Adrenal gland (tissue), 19 donors: ENCODE measurements at regions of chr9 and their contacts with region 1.

Region 1: GRCh38 chr9:112486221-112487007 is at the start of gene KIAA1958:
- DNase-seq: peak; percentile 81 to 92 (median 88)
- H3K4me3 ChIP-seq: peak within 1 kb of the TSS; percentile 34 to 97 (median 74)
- H3K27ac ChIP-seq: peak within 1 kb of the TSS; percentile 47 to 90 (median 71)
- H3K4me1 ChIP-seq: peaks cover 22 to 31% of the 10 kb centered on the region in 2 donors
- H3K27me3 ChIP-seq: no peaks in the 10 kb centered on the region
- CTCF ChIP-seq: no peak
- POLR2A ChIP-seq: peak; percentile 29 to 66
- total RNA-seq, gene KIAA1958: 17.0 to 67.2 (median 37.9) TPM

Region 2: GRCh38 chr9:112546149-112547012 is 60.0 kb after region 1 on chr9:
- intact Hi-C with region 1: loop called in 1 of 2 experiments (anchors 10 kb)
- DNase-seq: no peak
- H3K4me3 ChIP-seq: no peak overlapping the region
- H3K27ac ChIP-seq: peak overlapping the region in 4 of 5 donors; percentile 24 to 78 (median 44)
- H3K4me1 ChIP-seq: peaks cover 56 to 96% of the 10 kb centered on the region in 2 donors
- H3K27me3 ChIP-seq: no peaks in the 10 kb centered on the region
- CTCF ChIP-seq: no peak
- POLR2A ChIP-seq: no peak

Region 3: GRCh38 chr9:112699230-112699629 is 212.8 kb after region 1 on chr9:
- intact Hi-C with region 1: loop called in 1 of 2 experiments (anchors 10 kb)
- DNase-seq: no peak
- H3K4me3 ChIP-seq: no peak overlapping the region
- H3K27ac ChIP-seq: no peak overlapping the region
- H3K4me1 ChIP-seq: peaks cover 0 to 4% of the 10 kb centered on the region in 2 donors
- H3K27me3 ChIP-seq: no peaks in the 10 kb centered on the region
- CTCF ChIP-seq: no peak
- POLR2A ChIP-seq: no peak